ENCODE measurements at regions of chr1 and their contacts with region 1.

Region 1: GRCh38 chr1:84753516-84754385 is 63.5 kb upstream of the SSX2IP start:
- DNase-seq: peak; percentile 75
- H3K4me3 ChIP-seq: no peak overlapping the region
- H3K27ac ChIP-seq: no peak overlapping the region
- H3K4me1 ChIP-seq: peaks cover 14% of the 10 kb centered on the region
- H3K27me3 ChIP-seq: no peaks in the 10 kb centered on the region

Region 2: GRCh38 chr1:83931658-83932253 is 822.0 kb before region 1 on chr1:
- in situ Hi-C with region 1: loop called (anchors 25 kb)
- DNase-seq: peak; percentile 81
- H3K4me3 ChIP-seq: no peak overlapping the region
- H3K27ac ChIP-seq: no peak overlapping the region
- H3K4me1 ChIP-seq: no peaks in the 10 kb centered on the region
- H3K27me3 ChIP-seq: no peaks in the 10 kb centered on the region

Region 3: GRCh38 chr1:84143796-84144565 is 609.8 kb before region 1 on chr1 and contains the start of gene PRKACB:
- in situ Hi-C with region 1: loop called (anchors 25 kb)
- DNase-seq: peak; percentile 56
- H3K4me3 ChIP-seq: no peak within 1 kb of the TSS
- H3K27ac ChIP-seq: no peak within 1 kb of the TSS
- H3K4me1 ChIP-seq: peaks cover 18% of the 10 kb centered on the region
- H3K27me3 ChIP-seq: no peaks in the 10 kb centered on the region
- total RNA-seq, gene PRKACB: 21.9 and 23.9 TPM in 2 replicates

Region 4: GRCh38 chr1:84253891-84254290 is 499.9 kb before region 1 on chr1:
- in situ Hi-C with region 1: no loop called
- DNase-seq: peak; percentile 95
- H3K4me3 ChIP-seq: no peak overlapping the region
- H3K27ac ChIP-seq: peak overlapping the region; percentile 30
- H3K4me1 ChIP-seq: peaks cover 23% of the 10 kb centered on the region
- H3K27me3 ChIP-seq: no peaks in the 10 kb centered on the region

Region 5: DNA sequence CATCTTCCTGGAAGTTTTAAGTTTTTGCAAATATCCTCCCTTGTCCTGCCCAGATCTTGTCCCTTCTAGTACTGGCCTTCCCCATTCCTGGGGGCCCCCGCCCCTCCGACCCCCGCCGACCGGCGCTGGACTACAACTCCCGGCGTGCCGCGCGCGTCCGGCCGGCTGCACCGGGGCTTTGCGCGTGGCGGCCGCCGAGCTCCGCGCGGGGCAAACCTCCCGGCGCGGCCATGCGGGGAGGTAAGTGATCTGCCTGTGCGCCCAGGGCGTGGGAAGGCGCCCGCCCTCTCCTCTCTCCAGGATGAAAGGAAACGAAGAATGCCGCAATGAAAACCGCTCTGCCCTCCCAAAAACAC is 455.4 kb before region 1 on chr1:
- in situ Hi-C with region 1: no loop called
- DNase-seq: peak; percentile 69
- H3K4me3 ChIP-seq: peak overlapping the region; percentile 89
- H3K27ac ChIP-seq: no peak overlapping the region
- H3K4me1 ChIP-seq: peaks cover 34% of the 10 kb centered on the region
- H3K27me3 ChIP-seq: no peaks in the 10 kb centered on the region

Region 6: DNA sequence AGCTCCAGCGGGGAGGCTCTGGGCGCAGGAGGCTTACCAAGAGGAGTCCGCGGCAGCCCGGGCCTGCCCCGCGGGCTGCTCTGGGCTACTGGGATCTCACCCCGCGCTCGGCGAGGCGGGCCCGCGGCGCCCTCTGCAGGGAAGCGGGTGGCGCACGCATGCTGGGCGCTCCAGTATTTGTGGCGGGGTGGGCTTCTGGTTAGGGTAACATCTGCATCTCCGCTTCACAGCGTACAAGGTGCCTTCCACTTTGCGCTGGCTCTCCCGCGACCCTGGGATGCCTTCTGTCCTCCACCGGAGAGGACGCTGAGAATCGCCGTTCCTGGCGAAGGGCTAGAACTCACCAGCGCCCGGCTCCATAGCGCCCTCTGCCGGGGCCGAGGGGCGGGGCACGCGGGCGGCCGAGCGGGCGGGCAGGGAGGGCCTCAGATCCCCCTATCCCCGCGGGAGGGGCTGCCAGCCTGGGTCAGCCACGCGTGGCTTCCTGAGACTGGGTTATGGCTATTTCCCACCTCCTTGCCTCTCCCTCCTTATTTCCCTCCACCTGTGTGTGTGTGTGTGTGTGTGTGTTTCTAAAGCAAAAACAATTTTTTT is 132.9 kb before region 1 on chr1:
- in situ Hi-C with region 1: loop called (anchors 10 kb)
- DNase-seq: peak; percentile 87
- H3K4me3 ChIP-seq: peak overlapping the region; percentile 71
- H3K27ac ChIP-seq: peak overlapping the region; percentile 95
- H3K4me1 ChIP-seq: peaks cover 16% of the 10 kb centered on the region
- H3K27me3 ChIP-seq: no peaks in the 10 kb centered on the region

Region 7: GRCh38 chr1:84959294-84959693 is 205.5 kb after region 1 on chr1:
- in situ Hi-C with region 1: no loop called
- DNase-seq: no peak
- H3K4me3 ChIP-seq: no peak overlapping the region
- H3K27ac ChIP-seq: no peak overlapping the region
- H3K4me1 ChIP-seq: peaks cover 15% of the 10 kb centered on the region
- H3K27me3 ChIP-seq: no peaks in the 10 kb centered on the region

Region 8: DNA sequence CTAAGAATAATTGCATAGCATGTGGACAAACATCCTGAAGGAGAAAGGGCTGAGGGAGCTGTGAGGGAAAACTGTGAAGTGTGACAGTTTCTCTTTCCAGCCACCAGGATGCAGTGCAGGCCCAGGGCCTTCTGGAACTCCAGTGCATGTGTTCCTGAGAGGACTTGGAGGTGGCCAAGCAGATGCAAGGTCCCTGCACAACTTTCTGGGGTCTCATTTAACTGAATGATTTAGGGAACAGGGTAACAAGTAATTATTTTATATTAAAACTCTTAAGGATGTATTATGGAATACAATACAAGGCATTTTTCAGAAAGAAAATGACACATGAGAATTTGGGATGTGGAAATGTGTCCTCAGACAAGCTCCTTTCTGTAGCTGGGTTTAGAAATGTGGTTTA is 355.7 kb after region 1 on chr1:
- in situ Hi-C with region 1: no loop called
- DNase-seq: peak; percentile 81
- H3K4me3 ChIP-seq: no peak overlapping the region
- H3K27ac ChIP-seq: no peak overlapping the region
- H3K4me1 ChIP-seq: no peaks in the 10 kb centered on the region
- H3K27me3 ChIP-seq: no peaks in the 10 kb centered on the region